ENCODE measurements at regions of chr17 and their contacts with region 1.

Region 1: GRCh38 chr17:4881761-4882555 is 17.4 kb upstream of the C17orf107 start:
- DNase-seq: peak; percentile 81
- ATAC-seq: peak; percentile 62

Region 2: GRCh38 chr17:4709794-4710692 is 171.9 kb before region 1 on chr17 and contains the start of gene ARRB2:
- intact Hi-C with region 1: loop called (anchors 10 kb)
- DNase-seq: peak; percentile 100
- ATAC-seq: peak; percentile 97
- total RNA-seq, gene ARRB2: 28.3 TPM

Region 3: GRCh38 chr17:4806777-4807604 is 75.0 kb before region 1 on chr17 and contains the start of gene PLD2:
- intact Hi-C with region 1: loop called (anchors 5 kb)
- DNase-seq: peak; percentile 95
- ATAC-seq: peak; percentile 99
- total RNA-seq, gene PLD2: 12.6 TPM

Region 4: GRCh38 chr17:4833178-4833940 is 48.6 kb before region 1 on chr17 and contains the start of gene MINK1:
- intact Hi-C with region 1: loop called (anchors 10 kb)
- DNase-seq: peak; percentile 95
- ATAC-seq: peak; percentile 97
- total RNA-seq, gene MINK1: 50.7 TPM

Measured in Right ventricle myocardium inferior (tissue), 1 donor.